Activated naive CD4-positive, alpha-beta T cell treated with anti-CD3 and anti-CD28 coated beads for 36 hours (primary cell): ENCODE measurements at regions of chr1 and their contacts with region 1.

Region 1: DNA sequence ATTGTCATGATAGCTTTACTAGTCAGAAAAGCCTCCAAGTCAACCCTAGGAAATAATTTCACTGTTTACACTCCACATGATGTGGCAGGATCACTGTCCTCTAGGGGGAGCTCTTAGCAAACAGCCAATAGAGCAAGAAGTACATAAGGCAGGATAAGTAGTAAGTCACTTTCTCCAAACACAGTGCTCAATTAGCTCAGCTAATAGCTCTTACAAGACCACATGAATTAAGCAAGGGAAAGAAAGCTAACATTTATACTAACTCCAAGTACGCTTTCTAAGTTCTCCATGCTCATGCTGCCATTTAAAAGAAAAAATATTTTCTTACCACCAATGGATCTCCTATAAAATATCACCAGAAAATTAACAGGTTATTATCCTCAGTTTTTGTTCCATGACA is 66.9 kb upstream of the LRIF1 start:
- DNase-seq: peak; percentile 77
- H3K4me3 Mint-ChIP-seq: no peak overlapping the region
- H3K27ac Mint-ChIP-seq: no peak overlapping the region
- H3K4me1 Mint-ChIP-seq: no peaks in the 10 kb centered on the region
- H3K27me3 Mint-ChIP-seq: peaks cover 9% of the 10 kb centered on the region

Region 2: GRCh38 chr1:110594456-110595352 is 435.9 kb before region 1 on chr1:
- CTCF ChIA-PET with region 1: no interaction called
- intact Hi-C with region 1: no loop called
- DNase-seq: no peak
- H3K4me3 Mint-ChIP-seq: no peak overlapping the region
- H3K27ac Mint-ChIP-seq: no peak overlapping the region
- H3K4me1 Mint-ChIP-seq: no peaks in the 10 kb centered on the region
- H3K27me3 Mint-ChIP-seq: no peaks in the 10 kb centered on the region

Region 3: DNA sequence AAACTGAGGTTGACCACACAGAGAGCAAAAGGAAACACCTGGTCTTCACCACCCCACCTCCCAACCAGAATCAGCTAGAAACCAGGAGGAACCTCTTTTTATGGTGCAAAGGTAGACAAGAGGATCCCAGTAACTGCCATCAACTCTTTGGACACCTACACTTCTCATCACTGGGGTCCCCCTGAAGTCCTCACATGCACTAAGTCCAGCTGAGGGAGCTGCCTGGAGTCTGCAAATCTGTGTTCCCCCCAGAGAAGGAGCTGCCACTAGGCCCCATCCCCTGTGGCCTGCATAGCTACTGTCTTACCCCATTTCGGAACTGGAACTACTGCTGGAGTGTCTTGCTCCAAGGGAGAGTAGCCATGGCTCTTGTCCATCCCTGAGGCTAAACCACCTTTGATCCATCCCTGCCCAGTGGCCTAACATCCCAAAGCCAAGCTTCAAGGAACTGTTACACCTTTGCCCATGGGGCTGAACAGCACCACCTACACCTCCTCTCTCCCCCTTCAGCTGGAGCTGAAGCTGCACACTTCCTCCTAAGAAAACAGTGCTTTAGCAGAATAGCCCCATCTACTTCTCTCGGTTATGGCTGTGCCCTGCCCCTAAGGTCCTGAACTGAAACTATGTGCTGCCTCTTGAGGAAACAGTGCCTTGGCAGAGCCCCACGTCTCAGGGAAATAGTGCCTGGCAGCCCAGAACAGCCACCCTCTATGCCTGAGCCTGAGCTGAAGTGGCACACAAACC is 243.1 kb before region 1 on chr1:
- CTCF ChIA-PET with region 1: interaction called, 20 read pairs
- intact Hi-C with region 1: loop called (anchors 1 kb)
- DNase-seq: peak; percentile 25
- H3K4me3 Mint-ChIP-seq: no peak overlapping the region
- H3K27ac Mint-ChIP-seq: peak overlapping the region; percentile 82
- H3K4me1 Mint-ChIP-seq: peaks cover 42% of the 10 kb centered on the region
- H3K27me3 Mint-ChIP-seq: no peaks in the 10 kb centered on the region

Region 4: DNA sequence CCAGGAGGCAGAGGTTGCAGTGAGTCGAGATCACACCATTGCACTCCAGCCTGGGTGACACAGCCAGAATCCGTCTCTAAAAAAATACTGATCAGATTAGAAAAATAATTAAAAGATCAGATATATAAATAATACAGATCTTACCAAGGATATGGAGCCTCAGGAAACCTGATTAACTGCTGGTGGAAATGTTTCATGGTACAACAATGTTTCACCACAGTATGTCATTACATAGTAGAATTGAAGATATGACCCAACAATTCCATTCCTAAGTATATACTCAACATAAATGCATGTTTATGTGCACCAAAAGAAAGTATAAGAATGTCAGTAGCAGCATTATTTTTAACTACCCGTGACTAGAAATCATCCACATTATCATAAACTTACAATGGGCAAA is 115.9 kb before region 1 on chr1:
- CTCF ChIA-PET with region 1: no interaction called
- intact Hi-C with region 1: no loop called
- DNase-seq: no peak
- H3K4me3 Mint-ChIP-seq: no peak overlapping the region
- H3K27ac Mint-ChIP-seq: no peak overlapping the region
- H3K4me1 Mint-ChIP-seq: peaks cover 14% of the 10 kb centered on the region
- H3K27me3 Mint-ChIP-seq: peaks cover 2% of the 10 kb centered on the region

Region 5: DNA sequence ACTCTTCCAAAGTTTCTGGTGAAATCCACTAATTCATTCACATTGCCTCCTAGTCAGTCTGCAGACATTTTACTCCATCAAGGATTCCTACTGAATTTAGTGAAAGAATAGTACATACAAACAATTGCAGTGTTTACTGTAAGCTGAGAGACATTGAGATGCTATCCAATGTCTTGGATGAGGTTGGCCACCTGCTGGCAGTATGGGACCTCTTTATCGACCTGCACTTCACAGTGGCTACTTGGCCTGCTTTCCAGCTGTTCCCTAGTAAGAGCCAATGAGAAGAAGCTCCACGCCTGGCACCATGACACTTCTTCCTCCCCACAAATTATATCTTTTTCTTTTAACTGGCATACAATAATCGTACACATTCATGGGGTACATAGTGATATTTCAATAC is 15.4 kb before region 1 on chr1:
- CTCF ChIA-PET with region 1: interaction called, 16 read pairs
- intact Hi-C with region 1: no loop called
- DNase-seq: no peak
- H3K4me3 Mint-ChIP-seq: no peak overlapping the region
- H3K27ac Mint-ChIP-seq: no peak overlapping the region
- H3K4me1 Mint-ChIP-seq: no peaks in the 10 kb centered on the region
- H3K27me3 Mint-ChIP-seq: peaks cover 15% of the 10 kb centered on the region

Region 6: GRCh38 chr1:111045033-111045722 is 14.6 kb after region 1 on chr1:
- CTCF ChIA-PET with region 1: interaction called, 16 read pairs
- intact Hi-C with region 1: no loop called
- DNase-seq: no peak
- H3K4me3 Mint-ChIP-seq: no peak overlapping the region
- H3K27ac Mint-ChIP-seq: no peak overlapping the region
- H3K4me1 Mint-ChIP-seq: no peaks in the 10 kb centered on the region
- H3K27me3 Mint-ChIP-seq: peaks cover 4% of the 10 kb centered on the region

Region 7: DNA sequence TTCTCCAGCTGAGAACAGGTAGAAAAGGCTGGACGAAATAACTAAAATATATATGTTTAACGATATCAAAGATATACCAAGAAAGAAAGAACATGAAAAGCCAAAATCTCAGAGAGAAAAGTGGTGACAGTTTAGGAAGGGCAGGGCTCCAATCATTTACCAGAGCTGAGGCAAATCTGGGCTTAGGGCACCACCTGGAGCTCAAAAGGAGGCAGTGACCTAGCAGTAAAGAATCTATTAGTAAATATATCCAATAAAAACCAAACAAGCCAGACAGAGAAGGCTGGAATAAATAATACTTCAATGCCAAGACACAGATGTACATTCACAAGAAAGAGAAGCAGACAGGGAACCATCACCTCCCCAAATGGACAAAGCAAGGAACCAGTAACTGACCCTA is 303.6 kb after region 1 on chr1:
- CTCF ChIA-PET with region 1: interaction called, 30 read pairs
- intact Hi-C with region 1: loop called (anchors 1 kb)
- DNase-seq: peak; percentile 76
- H3K4me3 Mint-ChIP-seq: no peak overlapping the region
- H3K27ac Mint-ChIP-seq: no peak overlapping the region
- H3K4me1 Mint-ChIP-seq: no peaks in the 10 kb centered on the region
- H3K27me3 Mint-ChIP-seq: no peaks in the 10 kb centered on the region

Region 8: DNA sequence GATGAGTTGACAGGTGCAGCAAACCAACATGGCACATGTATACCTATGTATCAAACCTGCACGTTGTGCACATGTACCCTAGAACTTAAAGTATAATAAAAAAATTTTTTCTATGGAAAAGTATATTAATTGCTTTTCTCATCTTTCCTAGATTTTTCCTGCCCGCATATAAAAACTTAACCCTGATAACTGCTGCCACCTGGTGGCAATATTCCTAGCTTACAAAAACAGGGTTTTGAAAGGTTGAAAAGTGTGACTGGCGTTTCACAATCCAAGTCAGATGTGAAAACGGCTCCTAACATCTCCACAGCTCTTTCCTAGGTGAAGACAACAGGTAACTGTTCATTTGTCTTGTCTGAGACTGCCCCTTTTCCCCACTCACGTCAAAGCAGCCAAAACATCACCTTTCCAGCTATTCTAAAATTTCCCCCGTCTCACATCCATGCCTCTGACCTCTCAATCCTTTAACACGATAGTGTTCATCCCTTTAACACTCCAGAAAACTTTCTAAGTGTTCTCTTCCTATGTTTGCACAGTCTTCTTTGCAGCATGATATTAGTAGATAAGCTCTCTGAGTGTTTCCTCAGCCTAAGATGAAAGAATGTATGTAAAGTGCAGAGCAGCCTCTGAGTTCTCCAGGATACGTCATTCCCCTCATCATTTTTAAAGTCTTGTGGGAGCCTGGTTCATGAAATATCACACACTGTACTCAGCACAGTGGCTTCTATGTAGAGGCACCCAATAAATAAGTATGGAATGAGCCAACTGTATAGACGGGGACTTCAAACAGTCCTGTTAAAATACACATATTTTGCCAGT is 369.4 kb after region 1 on chr1:
- CTCF ChIA-PET with region 1: interaction called, 28 read pairs
- intact Hi-C with region 1: loop called (anchors 1 kb)
- DNase-seq: peak; percentile 66
- H3K4me3 Mint-ChIP-seq: no peak overlapping the region
- H3K27ac Mint-ChIP-seq: no peak overlapping the region
- H3K4me1 Mint-ChIP-seq: peaks cover 22% of the 10 kb centered on the region
- H3K27me3 Mint-ChIP-seq: no peaks in the 10 kb centered on the region

Region 9: DNA sequence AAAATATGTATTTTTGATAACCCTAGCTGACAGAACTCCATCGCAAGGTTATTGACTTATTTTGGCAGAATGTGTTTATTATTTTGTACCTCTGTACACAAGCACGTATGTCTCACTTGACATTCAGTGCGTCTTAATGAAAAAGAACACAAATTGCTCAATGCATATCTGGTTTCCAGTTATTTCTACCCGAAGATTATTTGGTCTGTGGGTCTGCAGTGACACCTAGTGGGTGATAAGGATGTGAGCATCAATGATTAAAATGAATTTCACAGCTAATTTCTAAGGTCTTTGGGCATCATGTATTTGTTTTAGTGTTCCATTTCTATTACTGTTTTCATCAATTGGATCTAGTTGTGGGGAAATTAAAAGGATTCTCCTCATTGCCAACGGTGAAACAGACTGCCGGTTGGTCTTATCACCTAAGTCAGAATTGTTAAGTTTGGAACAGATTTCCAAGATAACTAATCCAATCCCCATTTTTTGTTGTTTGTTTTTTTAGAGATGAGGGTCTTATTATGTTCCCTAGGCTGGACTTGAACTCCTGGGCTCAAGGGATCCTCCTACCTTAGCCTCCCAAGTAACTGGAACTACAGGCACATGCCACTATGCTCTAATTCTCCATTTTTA is 739.0 kb after region 1 on chr1:
- CTCF ChIA-PET with region 1: interaction called, 3 read pairs
- intact Hi-C with region 1: loop called (anchors 5 kb)
- DNase-seq: peak; percentile 67
- H3K4me3 Mint-ChIP-seq: no peak overlapping the region
- H3K27ac Mint-ChIP-seq: no peak overlapping the region
- H3K4me1 Mint-ChIP-seq: peaks cover 12% of the 10 kb centered on the region
- H3K27me3 Mint-ChIP-seq: no peaks in the 10 kb centered on the region